ENCODE measurements at regions of chr5 and their contacts with region 1.

Region 1: DNA sequence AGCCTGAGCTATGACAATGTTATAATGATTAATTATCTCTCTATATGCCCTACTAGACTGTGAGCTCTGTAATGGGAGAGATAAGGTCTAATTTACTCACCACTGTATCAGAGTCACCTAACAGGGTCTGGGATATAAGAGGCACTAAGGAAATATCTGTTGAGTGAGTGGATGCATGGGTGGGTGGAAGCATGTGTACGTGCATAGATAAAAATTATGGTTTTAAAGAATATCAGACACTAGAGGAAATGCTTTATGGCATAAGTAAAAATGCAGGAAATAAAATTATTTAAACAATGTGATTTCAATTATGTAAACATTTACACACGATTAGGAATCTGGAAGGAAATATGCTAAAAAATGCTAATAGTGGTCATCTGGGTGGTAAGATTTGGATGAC is 137.8 kb downstream of the SPOCK1 start:
- DNase-seq: peak; percentile 94
- H3K4me3 ChIP-seq: no peak overlapping the region
- H3K27ac ChIP-seq: peak overlapping the region; percentile 100
- H3K4me1 ChIP-seq: peaks cover 40% of the 10 kb centered on the region
- H3K27me3 ChIP-seq: no peaks in the 10 kb centered on the region
- CTCF ChIP-seq: no peak
- POLR2A ChIP-seq: peak; percentile 53

Region 2: GRCh38 chr5:137470111-137470920 is 109.0 kb after region 1 on chr5:
- CTCF ChIA-PET with region 1: interaction called, 3 read pairs
- POLR2A ChIA-PET with region 1: no interaction called
- dilution Hi-C with region 1: no loop called
- intact Hi-C with region 1: loop called (anchors 1 kb)
- DNase-seq: peak; percentile 88
- H3K4me3 ChIP-seq: no peak overlapping the region
- H3K27ac ChIP-seq: peak overlapping the region; percentile 78
- H3K4me1 ChIP-seq: peaks cover 31% of the 10 kb centered on the region
- H3K27me3 ChIP-seq: no peaks in the 10 kb centered on the region
- CTCF ChIP-seq: no peak
- POLR2A ChIP-seq: peak; percentile 33